A549 (cell line): ENCODE measurements at regions of chr20 and their contacts with region 1.

Region 1: DNA sequence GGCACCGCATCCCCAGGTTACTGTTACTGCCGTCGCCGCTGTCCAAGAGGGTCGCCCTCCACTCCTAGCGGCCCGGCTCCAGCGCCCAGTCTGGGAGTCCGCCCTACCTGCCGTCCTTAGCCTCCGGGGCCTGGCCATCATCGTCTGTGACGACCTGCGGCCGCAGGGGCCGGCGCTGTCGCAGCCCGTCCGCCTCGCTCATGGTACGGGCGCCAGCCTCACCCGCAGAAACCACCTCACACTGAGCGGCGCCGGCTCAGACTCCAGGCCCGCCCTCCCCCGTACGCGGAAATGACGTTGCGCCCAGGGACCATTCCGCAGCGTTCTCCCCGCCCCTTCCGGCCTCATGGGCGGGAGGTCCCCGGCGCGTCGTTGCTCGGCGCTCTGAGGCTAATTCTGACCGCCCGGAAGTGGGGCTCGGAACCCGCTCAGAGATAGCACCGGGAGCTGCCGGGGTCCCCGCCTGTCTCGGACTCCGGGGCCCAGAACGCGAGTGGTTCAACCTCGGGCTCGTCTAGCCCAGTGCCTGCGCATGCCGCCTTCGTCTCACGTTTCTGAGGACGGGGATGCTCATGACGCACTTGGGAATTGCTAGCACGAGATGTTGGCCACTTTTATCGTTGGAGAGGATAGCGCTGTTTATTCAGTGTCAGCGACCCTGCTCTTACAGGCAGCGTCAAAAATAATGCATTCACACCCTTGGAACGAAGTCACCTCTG is at the start of gene APMAP:
- DNase-seq: peak; percentile 94 to 97
- ATAC-seq: peak; percentile 88 to 96
- H3K4me3 ChIP-seq: peak within 1 kb of the TSS; percentile 85
- H3K27ac ChIP-seq: peak within 1 kb of the TSS; percentile 86 to 95
- H3K4me1 ChIP-seq: peaks cover 40% of the 10 kb centered on the region
- CTCF ChIP-seq: no peak
- EP300 ChIP-seq: no peak
- POLR2A ChIP-seq: peak; percentile 97
- RAD21 ChIP-seq: no peak
- polyA plus RNA-seq, gene APMAP: 113 and 118 TPM in 2 replicates

Region 2: DNA sequence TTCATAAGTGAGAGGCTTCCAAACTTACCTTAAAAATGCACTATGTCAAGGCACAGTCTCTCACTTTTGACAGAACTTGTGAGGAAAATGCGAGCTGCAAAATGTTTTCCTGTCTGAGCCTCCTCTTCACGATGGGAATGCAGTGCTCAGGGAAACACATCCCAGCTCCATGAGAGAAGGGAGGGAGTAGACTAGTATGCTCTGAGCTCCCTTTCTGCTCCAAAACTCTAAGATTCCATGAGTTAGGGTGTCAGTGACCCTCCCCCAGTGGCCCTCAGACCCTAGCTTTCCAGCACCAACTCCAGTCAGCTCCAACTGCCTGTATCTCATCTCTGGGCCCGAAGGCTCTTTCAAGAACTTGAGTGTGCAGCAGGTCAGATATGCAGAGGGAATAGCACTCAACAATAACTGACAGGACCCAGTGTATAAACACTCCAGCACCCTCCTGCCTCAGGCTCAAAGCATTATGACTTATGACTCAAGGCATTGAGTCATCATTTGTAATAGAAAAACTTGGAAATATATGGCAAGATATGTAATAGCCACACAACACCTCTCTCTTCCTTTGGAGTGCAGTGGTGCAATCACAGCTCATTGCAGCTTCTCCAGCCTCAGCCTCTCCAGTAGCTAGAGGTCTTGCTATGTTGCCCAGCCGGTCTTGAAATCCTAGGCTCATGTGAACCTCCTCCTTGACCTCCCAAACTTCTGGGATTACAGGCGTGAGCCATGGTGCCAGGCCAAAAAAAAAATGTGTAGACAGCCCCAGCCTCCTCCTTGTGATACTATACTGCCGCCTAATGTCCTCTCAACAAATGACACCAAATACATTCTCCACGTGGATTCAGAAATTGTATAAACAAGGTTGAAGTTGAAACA is 186.2 kb after region 1 on chr20:
- CTCF ChIA-PET with region 1: interaction called, 67 read pairs
- POLR2A ChIA-PET with region 1: interaction called, 3 read pairs
- DNase-seq: peak; percentile 84 to 89
- ATAC-seq: peak; percentile 94 to 98
- H3K4me3 ChIP-seq: no peak overlapping the region
- H3K27ac ChIP-seq: peak overlapping the region; percentile 65 to 74
- H3K4me1 ChIP-seq: peaks cover 34% of the 10 kb centered on the region
- CTCF ChIP-seq: peak; percentile 99
- EP300 ChIP-seq: peak; percentile 41 to 73; a peak in 2 of 5 replicates
- POLR2A ChIP-seq: no peak
- RAD21 ChIP-seq: peak; percentile 100

Region 3: GRCh38 chr20:25223179-25223661 is 230.6 kb after region 1 on chr20:
- CTCF ChIA-PET with region 1: interaction called, 12 read pairs
- POLR2A ChIA-PET with region 1: no interaction called
- DNase-seq: peak; percentile 92 to 97
- ATAC-seq: peak; percentile 88
- H3K4me3 ChIP-seq: no peak overlapping the region
- H3K27ac ChIP-seq: peak overlapping the region; percentile 79 to 88
- H3K4me1 ChIP-seq: peaks cover 67% of the 10 kb centered on the region
- CTCF ChIP-seq: peak; percentile 47
- EP300 ChIP-seq: peak in 1 of 2 experiments; percentile 39; a peak in 1 of 5 replicates
- POLR2A ChIP-seq: no peak
- RAD21 ChIP-seq: peak; percentile 66 to 67

Region 4: DNA sequence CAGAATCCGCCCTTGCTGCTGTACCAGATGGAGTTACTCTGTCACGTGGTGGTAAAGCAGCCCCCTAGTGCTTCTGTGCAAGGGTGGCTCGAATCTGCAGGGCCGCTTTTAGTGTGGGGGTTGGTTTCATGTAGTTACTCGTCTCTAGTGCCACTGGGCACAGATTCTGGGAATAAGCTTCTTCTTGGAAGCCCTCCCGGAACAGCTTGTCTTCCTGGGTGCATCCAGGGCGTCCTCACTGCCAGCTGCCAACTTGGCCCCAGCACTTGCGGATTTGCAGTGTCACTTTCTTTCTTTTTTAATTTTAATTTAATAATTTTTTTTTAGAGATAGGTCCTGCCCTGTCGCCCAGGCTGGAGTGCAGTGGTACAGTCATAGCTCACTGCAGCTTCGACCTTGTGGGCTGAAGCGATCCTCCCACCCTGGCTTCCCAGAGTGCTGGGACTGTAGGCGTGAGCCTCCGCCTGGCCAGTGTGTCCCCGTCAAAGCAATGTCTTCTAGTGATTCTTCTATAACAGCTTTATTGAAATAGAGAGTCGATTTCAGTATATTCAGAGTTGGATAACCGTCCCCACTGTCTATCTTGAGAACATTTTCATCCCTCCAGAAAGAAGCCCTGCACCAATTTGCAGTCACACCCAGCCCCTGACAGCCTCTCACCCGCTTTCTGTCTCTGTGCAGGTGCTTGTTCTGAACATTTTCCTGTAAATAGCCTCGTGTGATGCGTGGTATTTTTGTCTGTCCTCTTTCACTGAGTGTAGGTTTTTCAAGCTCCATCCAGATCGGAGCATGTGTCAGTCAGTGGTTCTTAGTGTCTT is 281.1 kb after region 1 on chr20:
- CTCF ChIA-PET with region 1: interaction called, 18 read pairs
- POLR2A ChIA-PET with region 1: no interaction called
- DNase-seq: no peak
- ATAC-seq: no peak
- H3K4me3 ChIP-seq: no peak overlapping the region
- H3K27ac ChIP-seq: no peak overlapping the region; a peak in 1 of 6 replicates
- H3K4me1 ChIP-seq: no peaks in the 10 kb centered on the region; the same call in 2 of the 3 replicates
- CTCF ChIP-seq: no peak
- EP300 ChIP-seq: no peak
- POLR2A ChIP-seq: no peak
- RAD21 ChIP-seq: no peak

Region 5: DNA sequence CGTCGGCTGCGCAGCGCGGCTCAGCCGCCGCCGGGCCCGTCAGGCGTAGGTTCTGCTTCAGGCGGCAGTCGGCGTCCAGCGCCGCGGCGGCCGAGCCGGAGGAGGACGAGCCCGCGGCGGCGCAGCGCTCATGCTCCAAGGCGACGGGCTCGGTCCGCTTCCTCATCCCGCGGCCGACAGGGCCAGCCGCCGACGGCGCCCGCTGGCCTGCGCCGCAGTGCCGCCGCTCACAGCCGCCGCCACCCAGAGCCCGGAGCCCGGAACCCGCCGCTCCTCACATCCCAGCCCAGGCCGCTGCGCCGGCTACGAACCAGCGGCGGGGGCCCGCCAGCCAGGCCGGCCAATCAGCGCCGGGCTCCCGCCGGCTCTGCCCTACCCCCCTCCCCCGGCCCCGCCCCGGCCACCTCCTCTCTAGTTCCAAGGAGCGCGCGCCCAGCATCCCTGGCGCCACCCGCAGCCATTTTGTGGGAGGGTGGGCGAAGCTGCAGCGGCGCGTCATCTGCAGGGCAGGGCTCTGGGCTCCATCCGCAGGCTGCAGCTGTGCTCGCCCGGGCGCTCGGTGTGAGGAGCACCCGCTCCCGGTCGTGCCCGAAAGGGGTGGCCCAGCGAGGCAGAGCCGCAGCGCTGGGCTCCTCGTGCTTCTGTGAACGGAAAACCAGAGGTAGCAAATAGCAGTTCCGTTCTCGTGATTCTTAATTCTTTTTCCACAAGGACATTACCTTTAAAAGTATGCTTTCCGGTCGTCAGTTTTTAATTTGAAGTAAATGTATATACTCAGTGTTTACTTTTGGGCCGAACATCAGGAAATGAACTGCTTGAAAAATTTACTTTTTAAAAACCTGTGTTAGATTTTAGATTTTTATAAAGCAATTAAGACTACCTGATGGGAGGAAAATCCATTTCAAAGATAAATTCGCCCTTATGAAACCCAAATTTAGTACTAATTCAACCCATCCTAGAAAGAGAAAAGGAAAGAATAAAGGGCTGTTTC is 398.2 kb after region 1 on chr20 and contains the start of gene ABHD12:
- CTCF ChIA-PET with region 1: interaction called, 112 read pairs
- POLR2A ChIA-PET with region 1: no interaction called
- DNase-seq: peak; percentile 96 to 97
- ATAC-seq: peak; percentile 95 to 98
- H3K4me3 ChIP-seq: peak within 1 kb of the TSS; percentile 95
- H3K27ac ChIP-seq: peak within 1 kb of the TSS; percentile 78 to 90
- H3K4me1 ChIP-seq: peaks cover 3% of the 10 kb centered on the region; the same call in 1 of the 3 replicates
- CTCF ChIP-seq: no peak
- EP300 ChIP-seq: no peak
- POLR2A ChIP-seq: peak; percentile 93
- RAD21 ChIP-seq: peak in 1 of 2 experiments; percentile 20; a peak in 1 of 5 replicates
- polyA plus RNA-seq, gene ABHD12: 54.3 and 59.1 TPM in 2 replicates